ENCODE measurements at regions of chr1 and their contacts with region 1.

Region 1: DNA sequence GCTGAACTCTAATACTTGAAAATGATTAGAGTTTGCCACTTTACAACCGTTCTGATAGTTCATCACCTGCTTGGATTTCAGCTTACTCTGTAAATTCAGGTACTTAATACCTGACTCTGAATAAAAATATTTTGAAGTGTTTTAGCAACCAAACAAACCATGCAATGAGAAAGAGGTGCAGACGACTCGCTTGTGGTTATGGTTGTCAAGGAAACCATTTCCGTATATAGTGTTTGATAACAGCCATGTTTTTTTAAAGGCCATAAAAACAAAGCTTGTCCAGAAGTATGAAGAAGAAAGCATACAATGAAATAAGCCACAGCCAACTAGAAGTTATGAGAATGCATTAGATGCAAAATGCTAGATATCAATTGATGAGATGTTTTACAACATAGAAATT is 167.2 kb upstream of the HMCN1 start:
- DNase-seq: peak; percentile 7 to 91 (median 77)
- H3K4me3 ChIP-seq: peak overlapping the region; percentile 10
- H3K4me3 Mint-ChIP-seq: peak overlapping the region; percentile 40 to 74 (median 70)
- H3K27ac ChIP-seq: peak overlapping the region; percentile 74
- H3K27ac Mint-ChIP-seq: peak overlapping the region; percentile 96 to 100 (median 98)
- H3K4me1 ChIP-seq: peaks cover 54% of the 10 kb centered on the region
- H3K4me1 Mint-ChIP-seq: peaks cover 67 to 88% (median 87%) of the 10 kb centered on the region in 3 donors
- H3K27me3 ChIP-seq: no peaks in the 10 kb centered on the region
- H3K27me3 Mint-ChIP-seq: no peaks in the 10 kb centered on the region

Region 2: GRCh38 chr1:185636848-185637247 is 69.9 kb after region 1 on chr1:
- CTCF ChIA-PET with region 1: no interaction called
- POLR2A ChIA-PET with region 1: no interaction called
- DNase-seq: no peak
- H3K4me3 ChIP-seq: no peak overlapping the region
- H3K4me3 Mint-ChIP-seq: no peak overlapping the region
- H3K27ac ChIP-seq: no peak overlapping the region
- H3K27ac Mint-ChIP-seq: no peak overlapping the region
- H3K4me1 ChIP-seq: no peaks in the 10 kb centered on the region
- H3K4me1 Mint-ChIP-seq: no peaks in the 10 kb centered on the region
- H3K27me3 ChIP-seq: no peaks in the 10 kb centered on the region
- H3K27me3 Mint-ChIP-seq: peaks cover 2 to 7% of the 10 kb centered on the region in 2 donors

Region 3: GRCh38 chr1:185670187-185670627 is 103.2 kb after region 1 on chr1:
- CTCF ChIA-PET with region 1: interaction called, 13 read pairs
- POLR2A ChIA-PET with region 1: no interaction called
- DNase-seq: peak; percentile 19 to 68 (median 41)
- H3K4me3 ChIP-seq: no peak overlapping the region
- H3K4me3 Mint-ChIP-seq: no peak overlapping the region
- H3K27ac ChIP-seq: no peak overlapping the region
- H3K27ac Mint-ChIP-seq: peak overlapping the region in 2 of 8 donors; percentile 12 to 28
- H3K4me1 ChIP-seq: peaks cover 13% of the 10 kb centered on the region
- H3K4me1 Mint-ChIP-seq: peaks cover 19 to 31% (median 23%) of the 10 kb centered on the region in 3 donors
- H3K27me3 ChIP-seq: no peaks in the 10 kb centered on the region
- H3K27me3 Mint-ChIP-seq: no peaks in the 10 kb centered on the region

Region 4: GRCh38 chr1:185701650-185702049 is 134.7 kb after region 1 on chr1:
- CTCF ChIA-PET with region 1: no interaction called
- POLR2A ChIA-PET with region 1: no interaction called
- DNase-seq: no peak
- H3K4me3 ChIP-seq: no peak overlapping the region
- H3K4me3 Mint-ChIP-seq: no peak overlapping the region
- H3K27ac ChIP-seq: no peak overlapping the region
- H3K27ac Mint-ChIP-seq: no peak overlapping the region
- H3K4me1 ChIP-seq: no peaks in the 10 kb centered on the region
- H3K4me1 Mint-ChIP-seq: peaks cover 0 to 10% (median 7%) of the 10 kb centered on the region in 3 donors
- H3K27me3 ChIP-seq: no peaks in the 10 kb centered on the region
- H3K27me3 Mint-ChIP-seq: peaks cover 8 to 41% of the 10 kb centered on the region in 2 donors

Measured in CD8-positive, alpha-beta memory T cell (primary cell).